ENCODE measurements at regions of chr5 and their contacts with region 1.

Region 1: GRCh38 chr5:78899922-78900362 is 85.2 kb downstream of the ARSB start:
- DNase-seq: no peak
- H3K4me3 Mint-ChIP-seq: no peak overlapping the region
- H3K27ac Mint-ChIP-seq: no peak overlapping the region
- H3K4me1 Mint-ChIP-seq: no peaks in the 10 kb centered on the region
- H3K27me3 Mint-ChIP-seq: no peaks in the 10 kb centered on the region

Region 2: GRCh38 chr5:78757269-78758053 is 142.5 kb before region 1 on chr5:
- intact Hi-C with region 1: no loop called
- DNase-seq: no peak
- H3K4me3 Mint-ChIP-seq: no peak overlapping the region
- H3K27ac Mint-ChIP-seq: peak overlapping the region; percentile 3
- H3K4me1 Mint-ChIP-seq: peaks cover 21% of the 10 kb centered on the region
- H3K27me3 Mint-ChIP-seq: peaks cover 7% of the 10 kb centered on the region

Region 3: GRCh38 chr5:78953092-78953800 is 53.3 kb after region 1 on chr5:
- intact Hi-C with region 1: no loop called
- DNase-seq: no peak
- H3K4me3 Mint-ChIP-seq: no peak overlapping the region
- H3K27ac Mint-ChIP-seq: no peak overlapping the region
- H3K4me1 Mint-ChIP-seq: peaks cover 24% of the 10 kb centered on the region
- H3K27me3 Mint-ChIP-seq: no peaks in the 10 kb centered on the region

Region 4: DNA sequence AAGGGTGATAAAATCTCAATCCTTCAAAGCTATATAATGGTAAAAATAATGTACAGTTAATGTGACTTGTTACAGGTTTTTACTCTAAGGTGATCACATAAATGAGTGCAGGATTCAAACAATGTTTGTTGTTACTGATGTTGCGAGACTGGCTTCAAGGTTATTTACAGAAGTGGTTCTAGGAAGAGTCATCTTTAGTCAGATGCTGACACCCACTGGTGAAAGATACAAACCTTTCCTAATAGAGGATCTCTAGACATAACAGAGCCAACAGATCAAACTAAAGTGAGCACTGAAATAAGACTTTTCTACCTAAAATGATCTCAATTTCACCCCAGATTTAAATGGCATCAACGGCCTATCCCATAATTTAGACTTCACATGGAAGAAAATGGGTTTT is 64.9 kb after region 1 on chr5:
- intact Hi-C with region 1: loop called (anchors 1 kb)
- DNase-seq: no peak
- H3K4me3 Mint-ChIP-seq: no peak overlapping the region
- H3K27ac Mint-ChIP-seq: no peak overlapping the region
- H3K4me1 Mint-ChIP-seq: peaks cover 2% of the 10 kb centered on the region
- H3K27me3 Mint-ChIP-seq: no peaks in the 10 kb centered on the region

Measured in activated T-helper 2 cell treated with anti-CD3 and anti-CD28 coated beads, Interferon-gamma antibody, Interleukin-2, Interleukin-4, amounts not matched to agents 10 μg/mL and 5 μg/mL and 100 μg/mL, durations not matched to agents 14 hours and 24 hours and 36 hours (primary cell).